Sigmoid colon (tissue), 7 donors: ENCODE measurements at regions of chr7 and their contacts with region 1.

Region 1: DNA sequence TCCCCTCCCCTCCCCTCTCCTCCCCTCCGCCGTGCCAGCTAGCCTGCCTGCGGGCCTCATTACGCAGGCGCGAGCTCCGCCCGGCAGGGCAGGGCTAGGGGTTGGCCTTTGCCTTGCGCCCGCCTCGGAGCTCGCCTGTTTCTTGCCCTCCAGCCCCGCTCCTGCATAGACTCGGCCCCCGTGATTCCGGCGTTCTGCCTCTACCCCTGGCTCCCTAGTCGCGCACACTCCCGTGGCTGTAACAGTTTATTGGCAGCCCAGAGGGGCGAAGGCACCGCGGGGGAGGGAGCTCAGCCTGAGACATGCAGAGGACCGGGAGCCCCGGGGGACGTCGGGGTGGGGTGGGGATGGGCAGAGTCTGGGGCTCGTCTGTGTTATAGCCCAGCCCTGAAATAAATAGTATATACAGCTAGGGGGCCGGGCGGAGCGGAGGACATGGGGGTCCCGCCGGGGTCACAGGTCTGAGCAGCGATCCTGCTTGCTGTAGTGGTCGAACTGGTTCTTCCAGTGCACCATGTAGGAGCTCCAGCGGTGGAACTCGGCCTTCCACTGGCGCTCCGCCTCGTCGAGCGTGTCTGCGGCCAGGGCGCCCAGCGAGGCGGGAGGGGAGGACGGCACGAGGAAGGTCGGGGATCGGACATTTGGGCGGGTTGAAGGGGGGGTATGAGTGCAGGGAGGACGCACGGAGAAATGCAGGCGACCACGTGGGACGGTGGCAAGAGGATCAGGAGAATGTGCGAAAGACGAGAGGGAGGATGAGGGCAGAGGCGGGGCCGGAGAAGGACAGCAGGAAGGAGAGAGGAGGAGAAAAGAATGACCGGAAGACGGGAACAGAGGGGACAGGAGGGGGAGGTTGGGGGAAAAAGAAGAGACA is 483 bp upstream of the UFSP1 start:
- DNase-seq: peak; percentile 97
- H3K4me3 ChIP-seq: peak overlapping the region; percentile 53 to 70 (median 59)
- H3K27ac ChIP-seq: peak overlapping the region; percentile 90 to 94 (median 93)
- H3K4me1 ChIP-seq: peaks cover 0 to 45% (median 39%) of the 10 kb centered on the region in 4 donors
- H3K27me3 ChIP-seq: peaks cover 1 to 8% (median 6%) of the 10 kb centered on the region in 3 donors
- CTCF ChIP-seq: no peak
- EP300 ChIP-seq: no peak
- POLR2A ChIP-seq: peak; percentile 63 to 77

Region 2: GRCh38 chr7:101077303-101078089 is 187.5 kb after region 1 on chr7:
- intact Hi-C with region 1: loop called (anchors 5 kb)
- DNase-seq: peak; percentile 77
- H3K4me3 ChIP-seq: no peak overlapping the region
- H3K27ac ChIP-seq: no peak overlapping the region
- H3K4me1 ChIP-seq: no peaks in the 10 kb centered on the region
- H3K27me3 ChIP-seq: no peaks in the 10 kb centered on the region
- CTCF ChIP-seq: peak; percentile 48 to 83 (median 72)
- EP300 ChIP-seq: no peak
- POLR2A ChIP-seq: no peak

Region 3: DNA sequence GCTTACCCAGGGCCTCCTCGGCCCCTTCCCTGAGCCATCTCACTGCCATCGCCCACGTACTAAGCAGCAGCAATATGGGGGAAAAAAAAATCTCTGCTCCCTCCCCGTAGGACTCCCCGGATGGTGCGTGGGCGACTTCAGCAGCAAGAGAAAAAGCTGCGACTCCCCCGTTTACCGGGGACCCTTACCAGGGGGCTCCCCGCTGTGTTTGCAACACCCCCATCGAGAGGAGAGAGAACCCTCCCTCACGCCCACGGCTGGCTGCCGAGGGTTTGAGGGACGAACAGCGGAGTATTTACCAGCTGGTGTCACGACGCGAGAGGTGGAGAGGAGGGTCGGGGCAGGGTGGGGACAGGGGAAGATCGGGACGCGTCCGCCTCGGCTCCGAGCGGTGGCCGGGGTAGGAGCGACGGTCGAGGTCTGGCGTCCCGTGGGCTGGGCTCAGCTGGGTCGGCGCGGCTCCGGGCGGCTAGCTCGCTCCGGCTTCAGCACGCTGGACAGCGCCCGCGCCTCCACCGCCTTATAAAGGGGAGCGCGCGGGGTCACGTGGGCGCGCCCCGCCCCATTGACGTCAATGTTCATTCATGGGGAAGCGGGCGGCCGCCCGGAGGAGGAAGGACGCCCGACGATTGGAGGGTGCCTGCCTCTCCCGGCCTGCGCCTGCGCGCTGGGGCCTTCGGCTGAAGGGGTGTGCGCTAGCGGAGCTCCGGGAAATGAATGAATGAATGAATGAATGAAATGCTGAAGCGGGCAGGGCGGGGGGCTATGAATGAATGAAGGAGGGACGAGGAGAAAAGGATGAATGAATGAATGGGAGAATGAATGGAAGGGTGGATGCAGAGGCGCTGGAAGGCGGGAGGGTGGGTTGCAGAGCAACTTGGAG is 275.3 kb after region 1 on chr7 and contains the start of gene VGF:
- intact Hi-C with region 1: loop called (anchors 10 kb)
- DNase-seq: peak; percentile 92
- H3K4me3 ChIP-seq: no peak within 1 kb of the TSS
- H3K27ac ChIP-seq: no peak within 1 kb of the TSS
- H3K4me1 ChIP-seq: peaks cover 0 to 51% (median 47%) of the 10 kb centered on the region in 4 donors
- H3K27me3 ChIP-seq: peaks cover 59 to 98% (median 92%) of the 10 kb centered on the region in 3 donors
- CTCF ChIP-seq: no peak
- EP300 ChIP-seq: no peak
- POLR2A ChIP-seq: no peak
- total RNA-seq, gene VGF: 0.55 to 0.68 TPM in 2 of 4 donors, not detected in the others